Pancreas (tissue), 10 donors: ENCODE measurements at regions of chr3 and their contacts with region 1.

Region 1: GRCh38 chr3:13277860-13278531 is 142.1 kb downstream of the NUP210 start:
- DNase-seq: peak in 1 of 6 donors; percentile 48
- ATAC-seq: no peak
- H3K4me3 ChIP-seq: no peak overlapping the region
- H3K27ac ChIP-seq: no peak overlapping the region
- H3K4me1 ChIP-seq: no peaks in the 10 kb centered on the region
- H3K27me3 ChIP-seq: no peaks in the 10 kb centered on the region
- CTCF ChIP-seq: no peak

Region 2: DNA sequence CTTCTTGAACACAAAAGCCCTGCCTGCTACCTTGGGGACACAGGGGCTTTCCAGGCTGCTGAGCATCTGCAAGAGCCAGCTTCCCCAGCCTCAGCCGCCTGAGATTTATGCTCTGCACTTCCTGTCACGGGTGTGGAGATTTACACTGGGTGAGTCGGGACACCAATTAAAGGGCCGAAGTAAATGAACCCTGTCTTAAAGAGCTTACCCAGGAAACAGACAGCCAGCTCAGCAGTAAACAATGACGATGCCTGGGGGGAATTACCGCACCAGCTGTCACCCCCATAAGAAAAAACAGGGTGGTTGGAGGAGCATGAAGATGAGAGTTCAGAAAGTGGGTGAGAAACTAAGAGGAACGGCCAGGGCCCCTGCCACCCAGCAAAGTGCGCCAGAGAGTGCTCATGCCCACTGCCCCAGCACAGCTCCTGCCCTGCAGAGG is 167.3 kb before region 1 on chr3:
- intact Hi-C with region 1: loop called in 1 of 3 experiments (anchors 10 kb)
- DNase-seq: no peak
- ATAC-seq: peak in 2 of 4 donors; percentile 23 to 42
- H3K4me3 ChIP-seq: no peak overlapping the region
- H3K27ac ChIP-seq: peak overlapping the region in 1 of 4 donors; percentile 61
- H3K4me1 ChIP-seq: peaks cover 4 to 16% (median 13%) of the 10 kb centered on the region in 3 donors
- H3K27me3 ChIP-seq: no peaks in the 10 kb centered on the region
- CTCF ChIP-seq: no peak